Activated CD8-positive, alpha-beta T cell treated with anti-CD3 and anti-CD28 coated beads for 36 hours (primary cell): ENCODE measurements at regions of chr1 and their contacts with region 1.

Region 1: DNA sequence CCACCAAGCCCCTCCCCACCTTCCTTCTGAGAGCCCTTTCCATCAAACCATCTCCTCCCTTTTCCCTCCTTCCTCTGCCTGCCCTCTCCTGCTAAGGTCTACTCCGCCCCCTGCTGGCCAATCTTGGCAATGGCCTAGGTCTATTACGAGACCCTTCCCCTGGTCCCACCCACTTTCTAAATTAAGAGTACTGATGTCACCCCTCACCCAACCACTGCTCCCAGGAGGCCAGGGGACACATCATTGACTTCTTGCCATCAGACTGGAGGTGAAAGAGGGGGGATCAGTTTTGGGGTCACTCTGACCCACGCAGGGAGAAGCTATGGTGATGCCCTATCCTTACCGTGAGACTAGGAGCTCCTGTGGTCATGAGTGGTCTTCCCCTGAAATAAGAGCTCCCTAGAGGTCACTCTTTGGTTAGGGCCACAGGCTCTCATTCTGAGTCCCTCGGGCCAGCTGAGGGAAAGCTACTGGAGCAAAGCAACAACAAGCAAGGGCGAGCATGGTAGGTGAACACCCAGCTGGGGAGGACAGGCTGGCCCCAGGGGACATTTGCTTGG is 34.6 kb upstream of the S100A7 start:
- DNase-seq: peak; percentile 86
- ATAC-seq: peak; percentile 83
- H3K4me3 Mint-ChIP-seq: no peak overlapping the region
- H3K27ac Mint-ChIP-seq: no peak overlapping the region
- H3K4me1 Mint-ChIP-seq: no peaks in the 10 kb centered on the region
- H3K27me3 Mint-ChIP-seq: peaks cover 21% of the 10 kb centered on the region
- CTCF ChIP-seq: peak; percentile 89

Region 2: DNA sequence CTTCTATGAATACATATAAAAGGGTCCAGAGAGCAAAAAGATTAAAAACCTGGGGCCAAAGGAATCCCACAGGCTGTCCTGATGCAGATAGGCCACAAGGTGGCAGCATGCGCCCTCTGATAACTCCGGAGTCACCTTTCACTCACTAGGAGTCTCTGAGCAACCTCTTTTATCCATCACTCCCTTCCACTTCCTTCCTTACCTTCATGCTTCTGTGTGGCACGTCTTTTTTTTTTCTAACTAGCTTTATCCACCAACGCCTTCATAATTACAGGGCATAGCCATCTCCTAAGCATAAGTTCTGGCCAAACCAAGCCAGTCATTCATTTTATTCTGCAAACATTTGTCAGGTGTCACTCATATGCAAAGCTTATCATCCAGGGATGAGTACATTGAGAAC is 142.5 kb before region 1 on chr1:
- CTCF ChIA-PET with region 1: interaction called, 123 read pairs
- POLR2A ChIA-PET with region 1: interaction called, 3 read pairs
- intact Hi-C with region 1: loop called (anchors 5 kb)
- DNase-seq: peak; percentile 77
- ATAC-seq: peak; percentile 74
- H3K4me3 Mint-ChIP-seq: no peak overlapping the region
- H3K27ac Mint-ChIP-seq: no peak overlapping the region
- H3K4me1 Mint-ChIP-seq: peaks cover 2% of the 10 kb centered on the region
- H3K27me3 Mint-ChIP-seq: peaks cover 9% of the 10 kb centered on the region
- CTCF ChIP-seq: peak; percentile 84

Region 3: DNA sequence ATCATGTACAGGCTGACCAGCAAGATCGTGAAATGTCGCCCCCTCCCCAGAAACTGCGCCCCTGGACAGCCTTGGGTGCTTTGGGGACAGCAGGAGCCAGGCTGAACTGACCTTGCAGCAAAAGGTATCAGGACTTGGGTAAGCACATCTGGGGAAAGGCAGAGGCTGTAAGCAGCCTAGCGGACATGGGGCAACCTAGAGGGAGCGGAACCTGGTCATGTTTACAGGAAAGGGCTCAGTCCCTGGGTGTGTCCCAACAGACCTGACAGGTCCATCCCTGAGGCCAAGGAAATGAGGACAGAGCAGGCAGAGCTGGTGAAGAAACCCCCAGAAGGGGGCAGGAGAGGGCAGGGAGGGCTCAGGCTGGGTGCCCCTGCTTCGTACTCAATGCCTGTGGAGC is 101.1 kb before region 1 on chr1:
- CTCF ChIA-PET with region 1: no interaction called
- POLR2A ChIA-PET with region 1: no interaction called
- intact Hi-C with region 1: no loop called
- DNase-seq: no peak
- ATAC-seq: no peak
- H3K4me3 Mint-ChIP-seq: no peak overlapping the region
- H3K27ac Mint-ChIP-seq: no peak overlapping the region
- H3K4me1 Mint-ChIP-seq: no peaks in the 10 kb centered on the region
- H3K27me3 Mint-ChIP-seq: peaks cover 6% of the 10 kb centered on the region
- CTCF ChIP-seq: no peak

Region 4: DNA sequence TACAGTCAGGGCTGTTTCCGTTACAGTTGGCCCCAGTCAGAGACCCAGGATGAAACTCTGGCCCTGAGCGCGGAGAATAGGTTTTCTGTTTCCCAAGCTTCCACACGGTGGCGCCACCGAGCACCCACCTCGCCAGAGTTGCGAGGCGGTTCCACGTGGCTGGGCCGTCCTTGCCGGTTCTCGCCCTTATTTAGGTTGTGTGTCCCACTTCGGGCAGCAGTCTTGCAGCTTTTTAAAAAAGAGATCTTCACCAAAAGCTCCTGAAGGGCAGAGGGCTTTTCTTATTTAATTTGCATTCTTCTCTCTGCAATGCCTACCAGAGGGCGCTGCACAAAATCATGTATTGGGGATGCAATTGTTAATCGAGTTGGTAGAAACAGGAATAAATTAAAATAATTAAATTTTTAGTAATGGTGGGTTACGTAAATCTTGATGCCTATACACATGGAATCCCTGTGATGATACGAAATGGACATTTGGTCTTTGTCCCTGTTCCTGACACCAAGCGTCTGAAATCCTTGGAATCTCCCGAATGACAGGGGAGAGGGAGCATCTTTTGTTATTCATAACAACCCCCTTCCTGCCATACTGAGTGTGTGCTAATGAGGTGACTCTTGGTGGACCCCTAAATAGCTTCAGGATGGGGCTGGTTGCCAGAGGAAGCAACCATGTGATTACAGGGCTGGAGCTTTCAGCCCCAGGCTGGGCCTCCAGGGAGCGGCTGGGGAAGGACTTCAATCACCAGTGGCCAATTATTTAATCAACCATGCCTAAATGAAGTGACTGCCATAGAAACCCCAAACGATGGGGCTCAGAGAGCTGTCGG is 29.0 kb before region 1 on chr1:
- CTCF ChIA-PET with region 1: interaction called, 43 read pairs
- POLR2A ChIA-PET with region 1: interaction called, 3 read pairs
- intact Hi-C with region 1: no loop called
- DNase-seq: peak; percentile 73
- ATAC-seq: peak; percentile 78
- H3K4me3 Mint-ChIP-seq: no peak overlapping the region
- H3K27ac Mint-ChIP-seq: no peak overlapping the region
- H3K4me1 Mint-ChIP-seq: no peaks in the 10 kb centered on the region
- H3K27me3 Mint-ChIP-seq: peaks cover 16% of the 10 kb centered on the region
- CTCF ChIP-seq: peak; percentile 87

Region 5: GRCh38 chr1:153478692-153479618 is 16.1 kb before region 1 on chr1:
- CTCF ChIA-PET with region 1: interaction called, 40 read pairs
- POLR2A ChIA-PET with region 1: no interaction called
- intact Hi-C with region 1: no loop called
- DNase-seq: no peak
- ATAC-seq: no peak
- H3K4me3 Mint-ChIP-seq: no peak overlapping the region
- H3K27ac Mint-ChIP-seq: no peak overlapping the region
- H3K4me1 Mint-ChIP-seq: no peaks in the 10 kb centered on the region
- H3K27me3 Mint-ChIP-seq: peaks cover 18% of the 10 kb centered on the region
- CTCF ChIP-seq: no peak

Region 6: DNA sequence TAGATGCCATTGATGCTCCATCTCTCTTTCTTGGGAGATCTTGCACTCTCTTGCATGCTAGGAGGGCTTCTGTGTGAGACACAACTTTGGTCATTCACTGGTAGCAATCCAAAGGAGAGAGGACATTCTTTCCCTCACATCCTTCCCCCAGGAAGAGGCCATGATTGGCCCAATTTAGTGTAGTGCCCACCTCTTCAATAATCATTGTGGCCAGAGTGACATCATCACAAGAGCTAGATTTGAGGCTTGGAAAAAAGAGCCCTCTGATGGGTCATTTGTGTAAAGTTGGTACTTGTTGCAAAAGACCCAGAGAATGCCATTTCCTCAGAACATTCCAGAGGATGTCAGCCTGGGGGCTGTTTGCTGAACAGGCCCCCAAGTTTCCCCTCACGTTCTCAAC is 10.5 kb after region 1 on chr1:
- CTCF ChIA-PET with region 1: interaction called, 16 read pairs
- POLR2A ChIA-PET with region 1: no interaction called
- intact Hi-C with region 1: no loop called
- DNase-seq: no peak
- ATAC-seq: no peak
- H3K4me3 Mint-ChIP-seq: no peak overlapping the region
- H3K27ac Mint-ChIP-seq: no peak overlapping the region
- H3K4me1 Mint-ChIP-seq: peaks cover 3% of the 10 kb centered on the region
- H3K27me3 Mint-ChIP-seq: no peaks in the 10 kb centered on the region
- CTCF ChIP-seq: no peak